Activated CD4-positive, alpha-beta T cell treated with anti-CD3 and anti-CD28 coated beads, Interleukin-2, amount 10 ng/mL, durations not matched to agents 24 days and 14 days (primary cell): ENCODE measurements at regions of chr17 and their contacts with region 1.

Region 1: DNA sequence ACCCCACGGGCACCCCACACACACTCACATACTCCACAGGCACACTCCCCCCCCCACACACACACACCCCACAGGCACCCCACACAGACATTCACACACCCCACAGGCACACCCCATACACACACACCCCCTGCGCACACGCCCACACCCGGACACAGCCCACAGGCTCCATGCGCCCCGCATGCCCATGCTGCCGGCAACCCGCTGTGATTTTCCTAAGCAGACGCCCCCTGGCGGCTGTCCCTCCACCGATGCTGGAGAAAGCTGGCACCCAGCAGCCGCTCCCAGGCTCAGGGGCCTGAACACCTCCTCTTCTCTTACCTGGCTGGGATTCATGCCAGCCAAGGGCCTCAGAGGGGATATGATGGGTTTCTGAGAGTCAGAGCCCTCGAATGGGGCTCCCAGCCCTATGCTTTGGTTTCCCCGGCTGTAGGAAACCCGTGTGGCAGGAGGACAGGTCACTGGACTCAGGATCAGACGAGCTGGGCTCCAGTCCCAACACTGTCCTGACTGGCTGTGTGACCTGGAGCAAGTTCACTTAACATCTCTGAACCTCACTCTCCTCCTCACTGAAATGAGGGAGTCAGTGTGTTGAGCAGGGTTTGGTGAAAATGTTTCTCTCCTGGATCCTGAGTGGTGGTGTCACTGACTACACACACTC is 19.6 kb upstream of the TNFRSF13B start:
- DNase-seq: peak; percentile 94
- H3K4me3 Mint-ChIP-seq: no peak overlapping the region
- H3K27ac Mint-ChIP-seq: peak overlapping the region; percentile 59
- H3K4me1 Mint-ChIP-seq: peaks cover 34% of the 10 kb centered on the region
- H3K27me3 Mint-ChIP-seq: peaks cover 3% of the 10 kb centered on the region

Region 2: GRCh38 chr17:16922386-16923104 is 68.9 kb before region 1 on chr17:
- intact Hi-C with region 1: loop called (anchors 1 kb)
- DNase-seq: peak; percentile 66
- H3K4me3 Mint-ChIP-seq: no peak overlapping the region
- H3K27ac Mint-ChIP-seq: no peak overlapping the region
- H3K4me1 Mint-ChIP-seq: no peaks in the 10 kb centered on the region
- H3K27me3 Mint-ChIP-seq: peaks cover 2% of the 10 kb centered on the region

Region 3: DNA sequence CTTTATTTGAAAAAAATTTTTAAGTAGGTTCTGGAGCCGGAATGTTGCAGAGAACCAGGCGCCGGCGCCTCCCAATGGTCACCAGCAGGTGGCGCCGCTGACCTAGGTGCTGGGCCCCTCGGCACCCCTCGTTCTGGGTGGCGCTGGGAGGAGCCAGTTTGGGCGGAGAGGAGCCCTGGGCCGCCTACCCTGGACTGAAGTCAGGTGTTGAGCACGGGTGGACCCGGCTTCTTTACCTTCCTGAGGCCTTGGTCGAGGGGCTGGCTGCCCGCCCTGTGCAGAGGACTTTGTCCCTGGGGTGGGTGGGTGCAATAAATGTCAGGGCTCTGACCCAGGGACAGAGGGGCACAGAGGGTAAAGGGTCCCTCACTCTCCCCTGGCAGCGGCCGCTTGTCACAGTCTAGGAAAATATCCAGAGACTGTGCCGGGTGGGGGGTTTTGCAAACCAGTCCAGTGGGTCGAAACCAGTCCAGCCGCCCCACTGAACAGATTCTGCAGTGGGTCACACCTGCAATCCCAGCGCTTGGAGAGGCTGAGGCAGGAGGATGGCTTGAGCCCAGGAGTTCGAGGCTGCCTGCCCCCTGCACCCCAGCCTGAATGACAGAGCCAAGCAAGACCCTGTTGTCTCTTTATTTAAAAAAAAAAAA is 10.5 kb after region 1 on chr17:
- intact Hi-C with region 1: no loop called
- DNase-seq: peak; percentile 94
- H3K4me3 Mint-ChIP-seq: no peak overlapping the region
- H3K27ac Mint-ChIP-seq: no peak overlapping the region
- H3K4me1 Mint-ChIP-seq: no peaks in the 10 kb centered on the region
- H3K27me3 Mint-ChIP-seq: peaks cover 2% of the 10 kb centered on the region

Region 4: DNA sequence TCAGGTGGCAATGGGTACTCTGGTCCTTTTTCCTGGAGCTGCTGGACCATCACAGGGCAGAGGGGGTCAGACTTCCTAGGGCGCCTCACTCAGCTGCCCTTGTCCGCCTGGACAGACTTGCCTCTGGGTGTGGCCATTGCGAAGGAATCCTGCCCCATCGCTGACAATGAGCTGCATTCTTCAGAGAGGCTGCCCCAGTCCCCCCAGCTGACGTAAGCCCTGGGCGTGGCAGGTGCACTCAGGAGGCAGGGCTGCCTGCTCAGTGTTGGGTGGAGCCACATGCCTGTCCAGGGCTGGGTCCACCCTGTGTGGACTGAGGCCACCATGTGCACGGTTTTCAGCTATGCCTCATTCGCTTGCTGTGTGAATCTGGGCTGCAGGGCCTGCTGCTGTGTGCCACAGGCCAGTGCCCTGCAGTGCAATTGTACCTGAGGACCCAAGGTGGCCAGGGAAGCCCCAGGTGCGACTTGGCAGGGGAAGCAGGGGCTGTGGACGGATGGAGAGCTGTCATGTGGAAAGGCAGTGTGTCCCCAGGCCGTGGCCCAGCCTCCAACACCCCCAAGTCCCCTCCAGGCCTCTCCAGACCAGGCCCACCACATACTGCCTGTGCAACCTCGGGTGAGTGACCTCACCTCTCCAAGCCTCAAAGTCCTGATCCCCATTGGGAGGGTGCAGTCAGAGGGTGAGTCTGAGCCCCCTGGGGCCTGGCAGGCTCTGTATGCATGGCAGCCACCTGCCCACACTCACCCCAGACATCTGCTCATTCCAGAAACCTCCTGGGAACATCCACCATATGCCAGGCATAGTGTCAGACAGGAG is 36.8 kb after region 1 on chr17:
- intact Hi-C with region 1: no loop called
- DNase-seq: no peak
- H3K4me3 Mint-ChIP-seq: no peak overlapping the region
- H3K27ac Mint-ChIP-seq: no peak overlapping the region
- H3K4me1 Mint-ChIP-seq: no peaks in the 10 kb centered on the region
- H3K27me3 Mint-ChIP-seq: peaks cover 1% of the 10 kb centered on the region